PC-9 (cell line): ENCODE measurements at regions of chr19 and their contacts with region 1.

Region 1: GRCh38 chr19:17873786-17874757 is 2.3 kb downstream of the SLC5A5 start:
- DNase-seq: peak; percentile 42 to 51
- H3K4me3 ChIP-seq: peak overlapping the region; percentile 53; the same call in 1 of the 2 replicates
- H3K27ac ChIP-seq: no peak overlapping the region
- H3K4me1 ChIP-seq: peaks cover 5% of the 10 kb centered on the region
- H3K27me3 ChIP-seq: peaks cover 4% of the 10 kb centered on the region; the same call in 1 of the 2 replicates
- CTCF ChIP-seq: no peak

Region 2: DNA sequence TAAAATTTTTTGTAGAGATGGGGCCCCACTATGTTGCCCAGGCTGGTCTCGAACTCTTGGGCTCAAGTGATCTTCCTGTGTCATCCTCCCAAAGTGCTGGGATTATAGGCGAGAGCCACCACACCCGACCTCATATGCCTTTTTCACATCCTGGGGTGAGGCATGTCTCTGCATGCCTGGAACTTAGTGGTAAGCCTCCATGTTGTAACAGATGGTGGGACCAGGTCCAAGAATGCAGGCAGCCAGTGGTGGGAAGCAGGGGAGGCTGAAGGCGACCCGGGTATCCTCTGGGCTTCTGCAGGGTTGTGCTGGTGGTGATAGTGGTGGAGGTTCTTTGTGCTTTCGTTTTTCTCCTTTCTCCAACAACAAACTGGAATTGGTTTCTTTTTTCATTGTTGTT is 28.6 kb after region 1 on chr19:
- CTCF ChIA-PET with region 1: interaction called, 12 read pairs
- POLR2A ChIA-PET with region 1: no interaction called
- intact Hi-C with region 1: no loop called
- DNase-seq: no peak
- H3K4me3 ChIP-seq: no peak overlapping the region
- H3K27ac ChIP-seq: no peak overlapping the region
- H3K4me1 ChIP-seq: peaks cover 4% of the 10 kb centered on the region; the same call in 1 of the 2 replicates
- H3K27me3 ChIP-seq: peaks cover 21% of the 10 kb centered on the region; the same call in 1 of the 2 replicates
- CTCF ChIP-seq: no peak

Region 3: GRCh38 chr19:17915951-17916593 is 42.0 kb after region 1 on chr19:
- CTCF ChIA-PET with region 1: no interaction called
- POLR2A ChIA-PET with region 1: interaction called, 11 read pairs
- intact Hi-C with region 1: no loop called
- DNase-seq: peak; percentile 45 to 93
- H3K4me3 ChIP-seq: no peak overlapping the region
- H3K27ac ChIP-seq: peak overlapping the region; percentile 68
- H3K4me1 ChIP-seq: peaks cover 17% of the 10 kb centered on the region
- H3K27me3 ChIP-seq: no peaks in the 10 kb centered on the region
- CTCF ChIP-seq: no peak

Region 4: GRCh38 chr19:17932485-17933338 is 58.6 kb after region 1 on chr19 and contains the start of gene CCDC124:
- CTCF ChIA-PET with region 1: interaction called, 39 read pairs
- POLR2A ChIA-PET with region 1: interaction called, 17 read pairs
- intact Hi-C with region 1: loop called (anchors 1 kb)
- DNase-seq: peak; percentile 85 to 94
- H3K4me3 ChIP-seq: peak within 1 kb of the TSS; percentile 87
- H3K27ac ChIP-seq: peak within 1 kb of the TSS; percentile 86
- H3K4me1 ChIP-seq: peaks cover 12% of the 10 kb centered on the region
- H3K27me3 ChIP-seq: no peaks in the 10 kb centered on the region
- CTCF ChIP-seq: peak; percentile 95
- total RNA-seq, gene CCDC124: 114 and 118 TPM in 2 replicates

Region 5: DNA sequence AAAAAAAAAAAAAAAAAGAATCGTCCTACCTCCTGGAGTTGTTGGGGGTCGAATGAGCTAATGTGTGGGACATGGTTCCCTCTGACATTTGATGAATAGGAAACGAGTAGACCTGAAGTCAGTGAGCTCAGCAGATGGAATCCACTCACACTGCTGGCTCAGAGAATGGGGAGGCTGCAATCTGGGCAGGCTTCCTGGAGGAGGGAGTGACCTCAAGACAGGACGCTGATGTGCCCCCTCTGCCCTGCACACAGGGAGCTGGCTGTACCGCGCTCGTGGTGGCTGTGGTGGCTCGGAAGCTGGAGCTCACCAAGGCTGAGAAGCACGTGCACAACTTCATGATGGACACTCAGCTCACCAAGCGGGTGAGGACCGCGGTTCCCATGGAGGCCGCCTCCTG is 114.1 kb after region 1 on chr19:
- CTCF ChIA-PET with region 1: no interaction called
- POLR2A ChIA-PET with region 1: no interaction called
- intact Hi-C with region 1: no loop called
- DNase-seq: no peak
- H3K4me3 ChIP-seq: no peak overlapping the region
- H3K27ac ChIP-seq: no peak overlapping the region
- H3K4me1 ChIP-seq: no peaks in the 10 kb centered on the region
- H3K27me3 ChIP-seq: no peaks in the 10 kb centered on the region
- CTCF ChIP-seq: no peak

Region 6: GRCh38 chr19:18000935-18001778 is 127.1 kb after region 1 on chr19:
- CTCF ChIA-PET with region 1: no interaction called
- POLR2A ChIA-PET with region 1: no interaction called
- intact Hi-C with region 1: loop called (anchors 5 kb)
- DNase-seq: peak; percentile 85 to 88
- H3K4me3 ChIP-seq: peak overlapping the region; percentile 99
- H3K27ac ChIP-seq: peak overlapping the region; percentile 75
- H3K4me1 ChIP-seq: peaks cover 38% of the 10 kb centered on the region
- H3K27me3 ChIP-seq: no peaks in the 10 kb centered on the region
- CTCF ChIP-seq: no peak

Region 7: DNA sequence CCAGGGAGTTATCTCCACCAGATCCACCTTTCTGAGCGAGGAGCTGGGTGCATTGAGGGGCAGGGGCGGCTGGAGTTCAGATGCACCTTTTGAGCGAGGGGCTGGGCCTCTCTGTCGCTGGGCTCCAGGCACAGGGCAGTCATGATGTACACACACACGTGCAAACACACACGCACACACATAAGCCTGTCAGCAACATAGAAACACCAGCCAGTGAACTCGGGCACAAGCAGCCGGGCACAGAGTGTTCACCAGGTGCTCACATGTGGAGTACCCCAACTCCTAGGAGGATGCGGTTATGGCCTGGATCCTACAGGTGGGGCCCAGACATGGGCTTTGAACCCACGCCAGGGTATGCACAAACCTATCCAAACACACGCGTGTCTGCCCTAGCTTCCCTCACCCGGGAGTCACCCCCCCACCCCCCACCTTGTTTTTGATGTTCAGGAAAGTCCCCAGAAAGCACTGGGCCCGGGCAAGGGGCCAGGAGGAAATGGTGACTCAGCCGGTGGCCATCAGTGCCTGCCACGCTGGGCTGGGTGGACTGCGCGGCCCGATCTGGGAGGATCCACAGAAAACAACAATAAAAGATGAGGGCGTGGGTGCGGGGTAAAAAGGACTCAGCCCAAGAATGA is 147.2 kb after region 1 on chr19:
- CTCF ChIA-PET with region 1: interaction called, 11 read pairs
- POLR2A ChIA-PET with region 1: no interaction called
- intact Hi-C with region 1: no loop called
- DNase-seq: peak; percentile 68 to 77
- H3K4me3 ChIP-seq: peak overlapping the region; percentile 56
- H3K27ac ChIP-seq: peak overlapping the region; percentile 83
- H3K4me1 ChIP-seq: peaks cover 19% of the 10 kb centered on the region
- H3K27me3 ChIP-seq: no peaks in the 10 kb centered on the region
- CTCF ChIP-seq: no peak

Region 8: GRCh38 chr19:18160971-18161635 is 287.0 kb after region 1 on chr19:
- CTCF ChIA-PET with region 1: interaction called, 14 read pairs
- POLR2A ChIA-PET with region 1: no interaction called
- intact Hi-C with region 1: no loop called
- DNase-seq: peak in 1 of 2 experiments; percentile 79
- H3K4me3 ChIP-seq: no peak overlapping the region
- H3K27ac ChIP-seq: no peak overlapping the region
- H3K4me1 ChIP-seq: peaks cover 4% of the 10 kb centered on the region; the same call in 1 of the 2 replicates
- H3K27me3 ChIP-seq: no peaks in the 10 kb centered on the region
- CTCF ChIP-seq: peak; percentile 25; the same call in 1 of the 2 replicates